Heart left ventricle (tissue), 16 donors: ENCODE measurements at regions of chr4 and their contacts with region 1.

Region 1: GRCh38 chr4:188534917-188535316 is 395.7 kb downstream of the TRIML1 start:
- DNase-seq: no peak
- ATAC-seq: no peak
- H3K4me3 ChIP-seq: no peak overlapping the region
- H3K27ac ChIP-seq: no peak overlapping the region
- H3K4me1 ChIP-seq: no peaks in the 10 kb centered on the region
- H3K27me3 ChIP-seq: no peaks in the 10 kb centered on the region
- CTCF ChIP-seq: no peak
- POLR2A ChIP-seq: no peak

Region 2: GRCh38 chr4:187782286-187782824 is 752.6 kb before region 1 on chr4:
- intact Hi-C with region 1: loop called in 1 of 10 experiments (anchors 5 kb)
- DNase-seq: no peak
- ATAC-seq: no peak
- H3K4me3 ChIP-seq: no peak overlapping the region
- H3K27ac ChIP-seq: no peak overlapping the region
- H3K4me1 ChIP-seq: no peaks in the 10 kb centered on the region
- H3K27me3 ChIP-seq: no peaks in the 10 kb centered on the region
- CTCF ChIP-seq: no peak
- POLR2A ChIP-seq: no peak

Region 3: GRCh38 chr4:188113156-188113555 is 421.8 kb before region 1 on chr4:
- intact Hi-C with region 1: no loop called
- DNase-seq: no peak
- ATAC-seq: no peak
- H3K4me3 ChIP-seq: no peak overlapping the region
- H3K27ac ChIP-seq: no peak overlapping the region
- H3K4me1 ChIP-seq: no peaks in the 10 kb centered on the region
- H3K27me3 ChIP-seq: peaks cover 0 to 6% (median 0%) of the 10 kb centered on the region in 9 donors
- CTCF ChIP-seq: no peak
- POLR2A ChIP-seq: no peak